ENCODE measurements at regions of chr15 and their contacts with region 1.

Region 1: DNA sequence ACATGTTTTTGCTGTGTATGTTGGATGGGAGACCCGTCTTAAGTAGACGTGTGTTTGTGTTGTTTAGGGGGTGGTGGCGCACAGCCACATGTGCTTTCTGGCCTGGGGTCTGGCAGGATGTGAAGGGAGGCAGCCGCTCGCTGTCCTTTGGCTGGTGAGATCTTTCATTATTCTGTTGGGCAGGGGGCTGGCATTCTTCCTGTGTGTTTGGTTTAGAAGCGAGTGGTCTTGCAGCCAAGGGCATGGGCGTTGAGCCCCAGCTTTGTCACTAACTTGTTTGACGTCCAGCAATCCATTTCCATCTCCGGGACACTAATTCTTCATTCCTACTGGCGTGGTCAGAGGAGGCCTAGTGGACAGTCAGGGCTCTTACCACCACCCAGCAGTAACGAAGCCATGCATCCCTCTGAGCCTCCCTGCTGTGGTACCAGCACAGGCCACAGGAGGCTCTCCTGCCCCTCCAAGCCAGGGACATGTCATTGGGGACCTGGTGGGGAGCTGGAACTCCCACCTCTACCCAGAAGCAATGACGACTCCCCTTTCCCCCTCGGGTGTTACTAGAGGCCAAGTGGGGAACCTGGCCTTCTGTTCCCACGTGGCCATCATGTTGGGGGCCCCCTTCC is 10.7 kb downstream of the THSD4 start:
- DNase-seq: no peak
- H3K4me3 ChIP-seq: no peak overlapping the region
- H3K27ac ChIP-seq: no peak overlapping the region
- H3K4me1 ChIP-seq: peaks cover 13% of the 10 kb centered on the region
- H3K27me3 ChIP-seq: no peaks in the 10 kb centered on the region
- CTCF ChIP-seq: peak; percentile 20 to 40
- POLR2A ChIP-seq: no peak

Region 2: DNA sequence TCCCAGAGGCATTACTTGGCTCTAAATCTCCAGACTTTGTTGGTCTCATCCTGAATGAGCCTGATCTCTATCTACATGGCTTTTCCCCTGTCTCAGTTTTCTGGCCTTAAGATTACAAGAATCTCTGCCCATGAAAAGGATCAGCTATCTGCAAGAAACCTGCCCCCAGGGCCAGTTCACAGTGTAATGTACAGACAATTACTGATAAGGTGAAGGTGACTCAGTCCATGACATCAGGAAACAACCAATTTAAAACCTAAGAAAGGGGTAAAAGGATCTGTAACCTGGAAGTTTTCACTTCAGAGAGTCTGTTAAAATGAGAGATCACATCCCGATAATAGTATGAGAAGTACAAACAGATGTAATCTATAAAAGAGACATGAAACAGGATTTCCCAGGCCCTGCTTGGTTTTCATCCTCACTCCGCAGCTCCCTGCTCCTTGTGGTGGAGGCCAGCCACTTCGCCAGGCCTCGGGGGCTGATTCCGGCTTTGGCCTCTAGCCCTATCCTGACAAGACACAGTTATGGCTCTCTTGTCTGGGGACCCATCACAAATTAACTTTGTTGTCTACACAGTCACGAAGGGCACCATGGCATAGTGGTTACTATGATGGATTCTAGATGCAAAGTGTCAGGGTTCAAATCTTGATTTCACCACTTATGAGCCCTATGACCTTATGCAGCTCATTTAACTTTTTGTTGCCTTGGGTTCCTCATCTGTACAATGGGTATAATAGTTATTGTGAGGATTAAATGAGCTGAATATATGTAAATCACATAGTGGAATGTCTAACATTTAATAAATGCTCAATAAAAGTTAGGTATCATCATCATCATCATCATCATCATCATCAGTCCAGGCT is 126.3 kb after region 1 on chr15:
- CTCF ChIA-PET with region 1: no interaction called
- POLR2A ChIA-PET with region 1: no interaction called
- dilution Hi-C with region 1: no loop called
- intact Hi-C with region 1: loop called (anchors 5 kb)
- DNase-seq: peak; percentile 58
- H3K4me3 ChIP-seq: no peak overlapping the region
- H3K27ac ChIP-seq: peak overlapping the region; percentile 60
- H3K4me1 ChIP-seq: peaks cover 31% of the 10 kb centered on the region
- H3K27me3 ChIP-seq: no peaks in the 10 kb centered on the region
- CTCF ChIP-seq: no peak
- POLR2A ChIP-seq: no peak

Region 3: GRCh38 chr15:71288348-71288955 is 162.5 kb after region 1 on chr15:
- CTCF ChIA-PET with region 1: no interaction called
- POLR2A ChIA-PET with region 1: interaction called, 5 read pairs
- dilution Hi-C with region 1: no loop called
- intact Hi-C with region 1: loop called (anchors 2 kb)
- DNase-seq: peak; percentile 39
- H3K4me3 ChIP-seq: no peak overlapping the region
- H3K27ac ChIP-seq: peak overlapping the region; percentile 67
- H3K4me1 ChIP-seq: peaks cover 32% of the 10 kb centered on the region
- H3K27me3 ChIP-seq: no peaks in the 10 kb centered on the region
- CTCF ChIP-seq: no peak
- POLR2A ChIP-seq: peak; percentile 19